GM23248 (cell line): ENCODE measurements at regions of chr17 and their contacts with region 1.

Region 1: GRCh38 chr17:33786478-33786877 is 468.6 kb upstream of the CCL2 start:
- DNase-seq: no peak
- H3K4me3 ChIP-seq: no peak overlapping the region
- H3K27ac ChIP-seq: no peak overlapping the region
- H3K4me1 ChIP-seq: no peaks in the 10 kb centered on the region
- H3K27me3 ChIP-seq: 0 out of 2 replicates have a peak, but pooled peaks cover 6% of the 10 kb centered on the region

Region 2: DNA sequence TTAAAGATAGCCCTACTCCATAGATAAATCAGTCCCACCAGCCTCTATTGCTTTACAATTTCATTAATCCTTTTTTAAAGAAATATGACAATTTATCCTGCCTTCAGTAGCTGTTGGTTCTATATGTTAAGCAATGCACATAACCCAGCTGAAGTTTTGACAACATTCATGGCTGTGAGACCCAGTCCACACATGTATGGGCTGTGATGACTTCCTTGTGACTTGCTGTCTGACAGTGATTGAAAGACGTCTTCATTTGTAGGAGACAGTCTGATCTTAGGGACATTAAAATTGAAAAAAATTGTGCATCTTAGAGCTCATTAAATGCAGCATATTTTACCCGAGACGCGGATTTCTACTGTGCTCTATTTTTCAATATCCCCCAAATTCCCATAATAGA is 241.4 kb before region 1 on chr17:
- in situ Hi-C with region 1: no loop called
- DNase-seq: no peak
- H3K4me3 ChIP-seq: no peak overlapping the region
- H3K27ac ChIP-seq: no peak overlapping the region
- H3K4me1 ChIP-seq: no peaks in the 10 kb centered on the region
- H3K27me3 ChIP-seq: no peaks in the 10 kb centered on the region

Region 3: DNA sequence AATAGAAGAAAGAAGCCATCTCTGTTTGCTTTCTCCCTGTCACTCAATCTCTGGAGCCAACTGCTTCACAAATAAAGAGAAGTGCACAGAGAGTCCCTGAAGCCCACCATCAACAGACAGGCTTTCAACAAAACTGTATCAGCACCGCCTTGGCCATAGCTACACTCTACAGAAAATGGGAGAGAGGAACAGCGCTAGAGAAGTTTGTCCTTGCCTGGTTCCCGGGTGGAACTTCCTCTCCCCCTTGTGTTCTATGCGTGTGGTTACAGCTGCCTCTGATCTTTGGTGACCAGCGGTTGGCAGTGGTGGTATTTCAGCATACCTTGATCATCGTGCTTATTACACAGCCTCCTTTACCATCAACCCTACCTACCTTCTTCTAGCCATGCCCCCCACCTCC is 377.2 kb after region 1 on chr17:
- in situ Hi-C with region 1: loop called (anchors 10 kb)
- DNase-seq: peak; percentile 36
- H3K4me3 ChIP-seq: no peak overlapping the region
- H3K27ac ChIP-seq: no peak overlapping the region
- H3K4me1 ChIP-seq: no peaks in the 10 kb centered on the region
- H3K27me3 ChIP-seq: peaks cover 56% of the 10 kb centered on the region